PC-3 (cell line): ENCODE measurements at regions of chr12 and their contacts with region 1.

Region 1: GRCh38 chr12:98593351-98594049 is at the start of gene SLC25A3:
- DNase-seq: peak; percentile 98
- ATAC-seq: peak; percentile 97
- H3K4me3 ChIP-seq: peak within 1 kb of the TSS; percentile 94
- H3K27ac ChIP-seq: peak within 1 kb of the TSS; percentile 66
- H3K4me1 ChIP-seq: peaks cover 12% of the 10 kb centered on the region
- H3K27me3 ChIP-seq: no peaks in the 10 kb centered on the region
- CTCF ChIP-seq: no peak
- total RNA-seq, gene SLC25A3: 466 and 547 TPM in 2 replicates

Region 2: GRCh38 chr12:98490501-98491453 is 102.7 kb before region 1 on chr12:
- CTCF ChIA-PET with region 1: no interaction called
- POLR2A ChIA-PET with region 1: no interaction called
- intact Hi-C with region 1: loop called (anchors 1 kb)
- DNase-seq: peak; percentile 90
- ATAC-seq: peak; percentile 90
- H3K4me3 ChIP-seq: peak overlapping the region; percentile 50
- H3K27ac ChIP-seq: peak overlapping the region; percentile 33
- H3K4me1 ChIP-seq: peaks cover 16% of the 10 kb centered on the region
- H3K27me3 ChIP-seq: no peaks in the 10 kb centered on the region
- CTCF ChIP-seq: peak; percentile 87

Region 3: GRCh38 chr12:98503592-98504367 is 89.7 kb before region 1 on chr12:
- CTCF ChIA-PET with region 1: no interaction called
- POLR2A ChIA-PET with region 1: no interaction called
- intact Hi-C with region 1: loop called (anchors 1 kb)
- DNase-seq: peak; percentile 89
- ATAC-seq: peak; percentile 64
- H3K4me3 ChIP-seq: peak overlapping the region; percentile 83
- H3K27ac ChIP-seq: peak overlapping the region; percentile 88
- H3K4me1 ChIP-seq: peaks cover 13% of the 10 kb centered on the region
- H3K27me3 ChIP-seq: no peaks in the 10 kb centered on the region
- CTCF ChIP-seq: no peak

Region 4: GRCh38 chr12:98572010-98572409 is 21.5 kb before region 1 on chr12:
- CTCF ChIA-PET with region 1: interaction called, 6 read pairs
- POLR2A ChIA-PET with region 1: no interaction called
- intact Hi-C with region 1: loop called (anchors 2 kb)
- DNase-seq: no peak
- ATAC-seq: no peak
- H3K4me3 ChIP-seq: no peak overlapping the region
- H3K27ac ChIP-seq: no peak overlapping the region
- H3K4me1 ChIP-seq: peaks cover 6% of the 10 kb centered on the region
- H3K27me3 ChIP-seq: no peaks in the 10 kb centered on the region
- CTCF ChIP-seq: peak; percentile 57

Region 5: DNA sequence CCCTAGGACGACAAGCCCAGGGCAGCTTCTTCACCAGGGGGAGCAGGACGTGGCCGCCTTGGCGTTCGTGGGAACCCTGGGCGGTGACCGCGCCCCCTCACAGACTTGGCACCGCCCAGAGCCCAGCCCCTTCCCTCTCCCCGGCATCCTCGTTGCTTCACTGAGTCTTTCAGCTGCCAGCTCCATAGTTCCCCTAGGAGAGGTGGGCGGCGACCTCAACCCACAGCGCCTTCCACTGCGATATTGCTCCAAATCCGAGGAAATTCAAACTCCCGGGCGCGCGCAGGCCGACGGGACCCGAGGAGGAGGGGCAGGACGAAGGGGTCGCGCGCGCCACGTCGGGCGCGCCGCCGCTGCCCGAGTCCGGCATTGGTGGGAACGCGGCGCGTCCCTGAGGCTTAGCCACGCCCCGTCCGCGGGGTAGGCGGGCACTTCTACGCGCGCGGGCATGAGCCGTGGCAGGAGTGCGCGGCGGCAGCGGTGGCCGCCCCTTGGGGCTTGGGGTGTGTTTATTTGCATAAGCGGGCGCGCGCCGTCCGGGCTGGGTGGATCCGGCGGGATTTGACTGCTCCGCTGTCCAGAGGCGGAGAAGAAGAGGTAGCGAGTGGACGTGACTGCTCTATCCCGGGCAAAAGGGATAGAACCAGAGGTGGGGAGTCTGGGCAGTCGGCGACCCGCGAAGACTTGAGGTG is 51.4 kb after region 1 on chr12 and contains the starts of genes APAF1 and IKBIP:
- CTCF ChIA-PET with region 1: no interaction called
- POLR2A ChIA-PET with region 1: interaction called, 5 read pairs
- intact Hi-C with region 1: loop called (anchors 1 kb)
- DNase-seq: peak; percentile 97
- ATAC-seq: peak; percentile 86
- H3K4me3 ChIP-seq: peak within 1 kb of the TSS; percentile 88
- H3K27ac ChIP-seq: peak within 1 kb of the TSS; percentile 51
- H3K4me1 ChIP-seq: peaks cover 6% of the 10 kb centered on the region
- H3K27me3 ChIP-seq: no peaks in the 10 kb centered on the region
- CTCF ChIP-seq: no peak
- total RNA-seq, gene APAF1: 8.5 and 10.1 TPM in 2 replicates
- total RNA-seq, gene IKBIP: 11.1 and 14.6 TPM in 2 replicates

Region 6: GRCh38 chr12:98653866-98654493 is 60.5 kb after region 1 on chr12:
- CTCF ChIA-PET with region 1: no interaction called
- POLR2A ChIA-PET with region 1: interaction called, 23 read pairs
- intact Hi-C with region 1: no loop called
- DNase-seq: peak; percentile 75
- ATAC-seq: peak; percentile 42
- H3K4me3 ChIP-seq: no peak overlapping the region
- H3K27ac ChIP-seq: no peak overlapping the region
- H3K4me1 ChIP-seq: peaks cover 8% of the 10 kb centered on the region
- H3K27me3 ChIP-seq: no peaks in the 10 kb centered on the region
- CTCF ChIP-seq: peak; percentile 90

Region 7: DNA sequence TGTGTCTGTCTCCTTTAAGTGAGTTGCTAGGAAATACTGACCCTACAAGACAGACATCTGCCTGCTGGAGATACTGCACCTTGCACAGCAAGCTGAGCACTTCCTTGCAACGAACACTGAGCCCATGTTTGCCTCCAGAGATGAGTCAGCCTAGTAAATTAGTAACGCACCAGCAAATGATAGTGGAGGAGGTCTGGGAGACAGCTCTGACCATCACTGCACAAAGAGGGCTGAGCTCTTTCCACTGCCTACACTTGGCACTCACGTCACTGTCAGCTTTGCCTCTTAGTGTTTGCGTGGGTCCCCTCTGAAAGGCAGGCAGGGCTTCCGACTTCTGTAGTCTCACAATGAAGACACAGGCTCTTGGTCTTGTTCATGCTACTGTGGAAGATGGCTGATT is 160.6 kb after region 1 on chr12:
- CTCF ChIA-PET with region 1: no interaction called
- POLR2A ChIA-PET with region 1: interaction called, 10 read pairs
- intact Hi-C with region 1: no loop called
- DNase-seq: peak; percentile 94
- ATAC-seq: peak; percentile 96
- H3K4me3 ChIP-seq: no peak overlapping the region
- H3K27ac ChIP-seq: peak overlapping the region; percentile 95
- H3K4me1 ChIP-seq: peaks cover 36% of the 10 kb centered on the region
- H3K27me3 ChIP-seq: no peaks in the 10 kb centered on the region
- CTCF ChIP-seq: no peak